Pancreas (tissue), 10 donors: ENCODE measurements at regions of chr5 and their contacts with region 1.

Region 1: DNA sequence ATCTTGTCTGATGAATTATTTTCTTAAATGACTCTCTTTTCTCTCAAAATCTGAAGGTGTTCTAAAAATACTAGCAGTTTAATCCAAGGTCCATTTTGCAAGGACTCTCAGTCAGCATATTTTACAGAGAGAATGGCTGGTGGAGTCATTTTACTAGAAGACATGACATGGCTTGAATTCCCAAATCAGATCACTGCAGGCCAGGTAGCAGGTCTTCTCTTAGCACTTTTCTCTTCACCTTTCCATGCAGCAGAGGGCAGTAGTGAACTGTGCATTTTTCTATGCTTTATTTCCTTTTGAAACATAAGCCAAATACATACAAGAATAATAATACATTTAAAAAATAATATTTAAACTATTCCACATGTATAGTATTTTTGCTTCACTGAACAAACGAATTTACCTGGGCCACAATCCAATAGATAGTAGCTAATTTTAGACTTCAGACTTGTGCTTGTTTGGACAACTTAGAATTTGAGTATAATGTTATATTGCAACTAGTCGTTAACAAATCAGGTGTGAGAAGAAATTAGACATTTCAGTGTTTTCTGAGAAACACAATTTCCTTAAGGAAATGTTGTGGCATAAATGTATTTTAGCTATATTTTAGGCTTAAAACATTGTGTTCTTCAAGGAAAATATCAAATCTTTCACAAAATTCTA is 289.4 kb upstream of the DAB2 start:
- DNase-seq: peak in 3 of 6 donors; percentile 23 to 67 (median 40)
- ATAC-seq: peak; percentile 70 to 89 (median 87)
- H3K4me3 ChIP-seq: no peak overlapping the region
- H3K27ac ChIP-seq: no peak overlapping the region
- H3K4me1 ChIP-seq: peaks cover 0 to 13% (median 10%) of the 10 kb centered on the region in 3 donors
- H3K27me3 ChIP-seq: no peaks in the 10 kb centered on the region
- CTCF ChIP-seq: peak; percentile 17 to 55 (median 46)

Region 2: DNA sequence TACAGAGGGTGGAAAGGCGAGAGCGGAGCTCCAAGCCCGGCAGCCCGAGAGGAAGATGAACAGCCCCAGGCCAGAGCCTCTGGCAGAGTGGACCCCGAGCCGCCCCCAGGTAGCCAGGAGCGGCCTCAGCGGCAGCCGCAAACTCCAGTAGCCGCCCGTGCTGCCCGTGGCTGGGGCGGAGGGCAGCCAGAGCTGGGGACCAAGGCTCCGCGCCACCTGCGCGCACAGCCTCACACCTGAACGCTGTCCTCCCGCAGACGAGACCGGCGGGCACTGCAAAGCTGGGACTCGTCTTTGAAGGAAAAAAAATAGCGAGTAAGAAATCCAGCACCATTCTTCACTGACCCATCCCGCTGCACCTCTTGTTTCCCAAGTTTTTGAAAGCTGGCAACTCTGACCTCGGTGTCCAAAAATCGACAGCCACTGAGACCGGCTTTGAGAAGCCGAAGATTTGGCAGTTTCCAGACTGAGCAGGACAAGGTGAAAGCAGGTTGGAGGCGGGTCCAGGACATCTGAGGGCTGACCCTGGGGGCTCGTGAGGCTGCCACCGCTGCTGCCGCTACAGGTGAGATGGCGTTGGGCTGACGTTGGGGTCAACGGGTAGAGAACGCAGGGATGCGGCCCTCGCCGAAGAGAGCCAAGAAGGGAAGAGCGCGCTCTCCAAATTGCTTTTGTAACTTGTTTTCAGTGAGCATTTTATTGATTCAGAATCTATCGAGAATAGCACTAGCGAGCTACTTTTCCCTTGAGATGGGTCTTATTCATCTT is 965.9 kb after region 1 on chr5 and contains the start of gene PTGER4:
- intact Hi-C with region 1: loop called in 2 of 3 experiments (anchors 5 to 10 kb)
- DNase-seq: peak; percentile 29 to 74 (median 52)
- ATAC-seq: peak; percentile 21 to 36 (median 28)
- H3K4me3 ChIP-seq: peak within 1 kb of the TSS; percentile 74 to 91 (median 87)
- H3K27ac ChIP-seq: peak within 1 kb of the TSS; percentile 66 to 95 (median 84)
- H3K4me1 ChIP-seq: peaks cover 0 to 27% (median 9%) of the 10 kb centered on the region in 3 donors
- H3K27me3 ChIP-seq: no peaks in the 10 kb centered on the region
- CTCF ChIP-seq: no peak
- total RNA-seq, gene PTGER4: 8.6 to 38.0 (median 13.3) TPM

Region 3: DNA sequence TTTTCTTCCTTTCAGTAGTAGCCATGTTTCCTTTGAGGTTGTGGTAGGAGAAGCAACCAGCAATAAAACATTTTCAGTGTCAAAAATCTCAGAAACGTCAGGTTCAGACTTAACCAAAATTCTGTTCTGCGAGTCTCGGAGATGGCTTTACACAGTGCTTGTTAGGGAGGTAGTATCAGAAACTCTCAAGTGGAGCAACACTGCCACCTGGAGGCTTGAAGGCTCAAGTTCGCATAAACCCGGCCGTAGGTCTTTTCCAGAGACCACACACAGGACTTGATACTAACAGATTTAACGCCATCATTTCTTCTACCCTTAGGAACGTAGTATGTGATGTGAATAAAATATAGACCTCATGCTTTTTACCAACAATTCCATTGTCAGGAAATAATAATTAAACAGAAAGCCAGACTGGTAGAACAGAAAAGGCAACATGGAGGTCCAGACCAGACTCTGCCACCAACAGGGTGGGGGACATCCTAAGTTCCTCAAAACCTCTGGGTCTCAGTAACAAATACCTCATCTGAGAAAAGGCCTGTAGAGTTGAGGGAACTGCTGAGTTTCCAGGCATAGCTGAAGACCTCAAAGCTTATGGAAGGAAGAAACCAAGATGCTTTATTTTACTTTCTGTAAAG is 974.1 kb after region 1 on chr5:
- intact Hi-C with region 1: loop called in 2 of 3 experiments (anchors 5 to 10 kb)
- DNase-seq: peak; percentile 64 to 87 (median 76)
- ATAC-seq: peak; percentile 73 to 92 (median 82)
- H3K4me3 ChIP-seq: peak overlapping the region in 1 of 4 donors; percentile 88
- H3K27ac ChIP-seq: peak overlapping the region in 2 of 4 donors; percentile 1 to 93
- H3K4me1 ChIP-seq: peaks cover 0 to 36% (median 14%) of the 10 kb centered on the region in 3 donors
- H3K27me3 ChIP-seq: no peaks in the 10 kb centered on the region
- CTCF ChIP-seq: peak; percentile 63 to 87 (median 76)